Mammary epithelial cell (primary cell): ENCODE measurements at regions of chr12 and their contacts with region 1.

Region 1: GRCh38 chr12:6470375-6471163 is at the start of gene VAMP1:
- DNase-seq: peak; percentile 97
- H3K4me3 ChIP-seq: peak within 1 kb of the TSS; percentile 64 to 83 (median 65)
- H3K27ac ChIP-seq: peak within 1 kb of the TSS; percentile 55
- H3K4me1 ChIP-seq: peaks cover 12% of the 10 kb centered on the region
- H3K27me3 ChIP-seq: no peaks in the 10 kb centered on the region
- CTCF ChIP-seq: no peak
- total RNA-seq, gene VAMP1: 2.1 to 5.0 TPM

Region 2: GRCh38 chr12:6195665-6196535 is 274.7 kb before region 1 on chr12:
- CTCF ChIA-PET with region 1: no interaction called
- dilution Hi-C with region 1: no loop called
- in situ Hi-C with region 1: no loop called
- intact Hi-C with region 1: loop called (anchors 5 kb)
- DNase-seq: peak; percentile 88
- H3K4me3 ChIP-seq: no peak overlapping the region
- H3K27ac ChIP-seq: peak overlapping the region; percentile 52
- H3K4me1 ChIP-seq: peaks cover 20% of the 10 kb centered on the region
- H3K27me3 ChIP-seq: no peaks in the 10 kb centered on the region
- CTCF ChIP-seq: peak; percentile 82 to 93

Region 3: GRCh38 chr12:6335451-6336078 is 135.0 kb before region 1 on chr12:
- CTCF ChIA-PET with region 1: interaction called, 13 read pairs
- dilution Hi-C with region 1: no loop called
- in situ Hi-C with region 1: no loop called
- intact Hi-C with region 1: loop called (anchors 5 kb)
- DNase-seq: peak; percentile 84
- H3K4me3 ChIP-seq: peak overlapping the region in 2 of 3 experiments; percentile 17 to 28
- H3K27ac ChIP-seq: peak overlapping the region; percentile 88
- H3K4me1 ChIP-seq: peaks cover 87% of the 10 kb centered on the region
- H3K27me3 ChIP-seq: no peaks in the 10 kb centered on the region
- CTCF ChIP-seq: peak; percentile 26 to 72

Region 4: GRCh38 chr12:6423267-6424007 is 47.1 kb before region 1 on chr12:
- CTCF ChIA-PET with region 1: interaction called, 17 read pairs
- dilution Hi-C with region 1: no loop called
- in situ Hi-C with region 1: no loop called
- intact Hi-C with region 1: loop called (anchors 1 kb)
- DNase-seq: peak; percentile 78
- H3K4me3 ChIP-seq: no peak overlapping the region
- H3K27ac ChIP-seq: no peak overlapping the region
- H3K4me1 ChIP-seq: no peaks in the 10 kb centered on the region
- H3K27me3 ChIP-seq: no peaks in the 10 kb centered on the region
- CTCF ChIP-seq: peak; percentile 87 to 90

Region 5: GRCh38 chr12:6540181-6540877 is 69.8 kb after region 1 on chr12:
- CTCF ChIA-PET with region 1: interaction called, 3 read pairs
- dilution Hi-C with region 1: no loop called
- in situ Hi-C with region 1: no loop called
- intact Hi-C with region 1: loop called (anchors 1 kb)
- DNase-seq: peak; percentile 97
- H3K4me3 ChIP-seq: peak overlapping the region in 2 of 3 experiments; percentile 23 to 31
- H3K27ac ChIP-seq: peak overlapping the region; percentile 64
- H3K4me1 ChIP-seq: peaks cover 43% of the 10 kb centered on the region
- H3K27me3 ChIP-seq: no peaks in the 10 kb centered on the region
- CTCF ChIP-seq: peak in 1 of 2 donors; percentile 5

Region 6: GRCh38 chr12:6899837-6900519 is 429.4 kb after region 1 on chr12:
- CTCF ChIA-PET with region 1: no interaction called
- dilution Hi-C with region 1: no loop called
- in situ Hi-C with region 1: no loop called
- intact Hi-C with region 1: no loop called
- DNase-seq: no peak
- H3K4me3 ChIP-seq: no peak overlapping the region
- H3K27ac ChIP-seq: no peak overlapping the region
- H3K4me1 ChIP-seq: peaks cover 6% of the 10 kb centered on the region
- H3K27me3 ChIP-seq: no peaks in the 10 kb centered on the region
- CTCF ChIP-seq: no peak